ENCODE measurements at regions of chr1 and their contacts with region 1.

Region 1: GRCh38 chr1:41416552-41417334 is 55.5 kb downstream of the FOXO6 start:
- DNase-seq: peak; percentile 71
- H3K4me3 Mint-ChIP-seq: no peak overlapping the region
- H3K27ac Mint-ChIP-seq: no peak overlapping the region
- H3K4me1 Mint-ChIP-seq: no peaks in the 10 kb centered on the region
- H3K27me3 Mint-ChIP-seq: peaks cover 3% of the 10 kb centered on the region

Region 2: DNA sequence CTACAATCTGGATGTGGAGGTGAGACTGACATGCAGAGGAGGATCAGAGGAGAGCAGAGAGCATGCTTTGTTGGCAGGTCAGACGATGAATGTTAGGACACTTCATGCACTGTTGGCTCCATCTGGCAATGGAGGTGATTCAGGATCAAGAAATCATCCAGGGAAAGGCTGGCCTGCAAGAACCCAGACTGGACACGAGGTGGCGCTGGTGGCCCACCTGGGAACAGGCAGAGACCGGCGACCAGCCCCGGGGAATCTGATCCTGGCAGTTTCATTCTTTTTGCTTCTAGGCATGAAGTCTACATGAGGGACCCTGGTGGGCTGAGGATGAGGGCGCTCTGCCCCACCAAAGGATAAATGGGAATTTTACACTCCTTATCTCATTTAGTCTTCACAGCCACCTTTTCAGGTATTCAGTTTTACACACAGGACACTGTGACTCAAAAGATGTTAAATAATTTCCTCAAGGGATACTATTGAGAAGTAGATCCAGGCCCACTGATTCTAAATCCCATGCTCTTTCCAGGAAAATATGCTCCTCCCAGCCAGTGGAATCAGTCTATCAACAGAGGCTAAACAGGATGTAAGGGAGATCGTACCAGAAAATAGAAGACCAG is 148.5 kb before region 1 on chr1:
- CTCF ChIA-PET with region 1: interaction called, 7 read pairs
- intact Hi-C with region 1: loop called (anchors 1 kb)
- DNase-seq: peak; percentile 77
- H3K4me3 Mint-ChIP-seq: no peak overlapping the region
- H3K27ac Mint-ChIP-seq: no peak overlapping the region
- H3K4me1 Mint-ChIP-seq: no peaks in the 10 kb centered on the region
- H3K27me3 Mint-ChIP-seq: no peaks in the 10 kb centered on the region

Region 3: DNA sequence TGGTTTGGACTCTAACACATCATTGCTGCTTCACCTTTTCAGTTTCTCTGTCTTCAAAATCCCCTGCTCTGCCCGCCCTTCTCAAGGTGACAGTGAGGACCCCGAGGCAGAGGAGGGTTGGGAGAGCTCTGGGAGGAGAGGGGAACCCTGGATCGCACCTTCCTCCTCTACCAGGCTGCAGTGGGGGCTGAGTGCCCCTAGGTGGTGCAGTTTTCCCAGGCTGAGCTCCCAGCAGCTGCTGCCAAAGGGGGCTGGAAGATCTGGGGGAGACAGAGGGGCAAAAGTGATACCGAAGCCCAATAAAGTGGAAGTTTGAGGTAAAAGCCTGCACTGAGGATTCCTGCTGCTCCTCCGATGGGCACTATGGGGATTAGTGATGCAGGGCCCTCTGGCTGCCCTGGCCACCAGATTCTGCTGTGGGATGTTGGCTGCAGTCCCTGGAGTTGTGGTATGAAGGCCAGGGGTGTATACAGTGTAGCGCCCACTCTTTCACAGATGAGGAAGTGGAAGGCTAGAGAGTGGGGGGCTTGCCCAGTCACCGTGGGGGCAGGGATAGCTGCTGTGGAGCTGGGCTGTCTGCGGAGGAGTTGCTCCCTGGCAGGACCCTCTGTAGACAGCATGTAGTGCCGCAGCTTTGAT is 133.9 kb before region 1 on chr1:
- CTCF ChIA-PET with region 1: interaction called, 47 read pairs
- intact Hi-C with region 1: loop called (anchors 1 kb)
- DNase-seq: peak; percentile 43
- H3K4me3 Mint-ChIP-seq: no peak overlapping the region
- H3K27ac Mint-ChIP-seq: no peak overlapping the region
- H3K4me1 Mint-ChIP-seq: no peaks in the 10 kb centered on the region
- H3K27me3 Mint-ChIP-seq: peaks cover 28% of the 10 kb centered on the region

Region 4: GRCh38 chr1:41322835-41323627 is 93.7 kb before region 1 on chr1:
- CTCF ChIA-PET with region 1: interaction called, 17 read pairs
- intact Hi-C with region 1: loop called (anchors 1 kb)
- DNase-seq: peak; percentile 52
- H3K4me3 Mint-ChIP-seq: no peak overlapping the region
- H3K27ac Mint-ChIP-seq: no peak overlapping the region
- H3K4me1 Mint-ChIP-seq: no peaks in the 10 kb centered on the region
- H3K27me3 Mint-ChIP-seq: peaks cover 2% of the 10 kb centered on the region

Region 5: DNA sequence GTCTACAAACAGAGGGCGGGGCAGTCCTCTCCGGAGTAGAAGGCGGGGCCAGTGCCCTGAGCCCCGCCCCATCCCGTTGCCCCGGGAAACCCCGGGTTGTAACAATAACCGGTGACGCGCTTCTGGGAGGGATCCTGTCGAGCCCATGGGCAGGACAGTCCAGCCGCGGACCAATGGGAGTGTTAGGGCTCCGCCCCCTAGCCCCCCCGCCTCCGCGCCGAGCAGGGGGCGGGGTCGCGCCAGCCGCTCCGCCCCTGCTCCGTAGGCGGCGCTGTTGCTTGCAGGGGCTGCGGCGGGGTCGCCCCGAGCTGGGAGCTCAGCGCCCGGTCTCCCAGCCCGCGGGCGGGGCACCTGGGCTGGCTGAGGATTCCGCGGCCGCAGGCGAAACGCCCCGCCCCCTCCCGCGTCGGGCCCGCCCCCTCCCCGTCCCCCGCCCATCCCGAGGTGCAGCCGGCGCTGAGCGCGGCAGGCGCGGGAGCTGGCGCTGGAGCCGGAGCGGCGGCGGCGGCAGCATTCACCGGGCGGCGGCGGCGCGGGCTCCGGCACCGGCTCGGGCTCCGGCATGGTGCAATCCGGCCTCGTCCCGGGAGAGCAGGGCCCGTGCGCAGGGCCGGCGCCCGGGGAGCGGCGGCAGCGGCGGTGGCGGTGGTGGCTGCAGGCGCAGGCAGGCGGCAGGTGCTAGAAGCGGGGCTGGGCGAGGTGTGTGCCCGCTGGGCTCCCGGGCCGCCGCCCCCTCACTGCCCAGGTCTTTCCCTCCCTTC is 55.6 kb before region 1 on chr1 and contains the start of gene FOXO6:
- CTCF ChIA-PET with region 1: interaction called, 5 read pairs
- intact Hi-C with region 1: loop called (anchors 5 kb)
- DNase-seq: peak; percentile 95
- H3K4me3 Mint-ChIP-seq: peak within 1 kb of the TSS; percentile 64
- H3K27ac Mint-ChIP-seq: no peak within 1 kb of the TSS
- H3K4me1 Mint-ChIP-seq: peaks cover 13% of the 10 kb centered on the region
- H3K27me3 Mint-ChIP-seq: peaks cover 32% of the 10 kb centered on the region
- total RNA-seq, gene FOXO6: 0.15 TPM in 1 of 2 experiments, not detected in the other

Region 6: DNA sequence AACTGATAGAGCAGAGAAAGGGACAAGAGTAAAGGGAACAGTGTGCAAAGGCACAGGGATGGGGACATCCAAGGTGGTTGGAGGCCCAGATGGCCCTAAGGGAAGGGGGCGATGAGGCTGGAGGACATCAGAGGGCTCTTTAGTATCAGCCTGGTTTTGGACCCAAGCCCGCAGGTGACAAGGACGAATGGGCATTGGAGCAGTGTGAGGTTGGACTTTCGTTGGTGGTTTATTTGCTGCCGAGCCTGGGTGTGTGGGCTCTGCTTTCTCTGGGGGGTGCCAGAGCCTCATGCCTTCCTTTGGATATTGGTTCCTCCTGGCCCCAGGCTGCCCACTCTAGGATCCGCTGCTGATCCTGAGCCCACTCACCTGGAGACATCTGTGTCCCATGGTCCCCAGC is 43.4 kb before region 1 on chr1:
- CTCF ChIA-PET with region 1: no interaction called
- intact Hi-C with region 1: no loop called
- DNase-seq: no peak
- H3K4me3 Mint-ChIP-seq: no peak overlapping the region
- H3K27ac Mint-ChIP-seq: no peak overlapping the region
- H3K4me1 Mint-ChIP-seq: no peaks in the 10 kb centered on the region
- H3K27me3 Mint-ChIP-seq: peaks cover 20% of the 10 kb centered on the region

Region 7: DNA sequence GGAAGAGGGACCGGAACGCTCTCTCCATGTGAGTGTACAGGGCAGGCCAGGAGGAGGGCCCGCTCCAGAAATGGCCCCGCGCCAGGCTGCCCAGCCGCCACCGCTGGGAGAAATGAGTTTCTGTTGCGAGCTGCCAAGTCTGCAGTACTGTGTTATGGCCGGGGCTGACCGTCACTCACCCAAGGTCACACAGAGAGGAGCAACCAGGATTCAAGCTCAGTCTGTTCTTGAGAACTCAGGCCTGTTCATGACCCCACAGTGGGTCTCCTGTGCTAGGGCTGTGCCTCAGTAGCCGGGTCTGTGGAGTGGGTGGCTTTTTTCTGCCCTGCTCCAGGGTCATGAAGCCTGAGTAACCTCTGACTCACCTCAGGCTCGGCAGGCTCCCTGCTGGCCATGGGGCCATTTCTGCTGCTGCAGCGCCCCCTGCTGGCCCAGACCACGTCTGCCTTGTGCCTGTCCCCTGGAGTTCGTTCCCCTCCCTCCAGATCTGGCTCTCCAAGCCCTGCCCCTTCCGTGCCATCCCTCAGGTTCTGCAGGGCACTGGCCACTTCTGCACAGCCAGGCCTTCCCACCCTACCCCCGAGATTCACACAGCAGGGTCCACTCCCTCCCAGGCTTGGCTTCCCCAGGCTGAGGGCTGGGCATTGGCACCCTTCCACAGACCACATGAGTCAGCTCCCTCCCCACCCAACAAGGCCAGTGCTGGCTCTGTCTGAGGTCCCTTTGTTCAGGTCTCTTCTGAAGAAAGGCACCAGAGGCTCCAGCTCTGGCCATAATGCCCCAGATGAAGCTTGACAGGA is 15.9 kb after region 1 on chr1:
- CTCF ChIA-PET with region 1: interaction called, 10 read pairs
- intact Hi-C with region 1: no loop called
- DNase-seq: peak; percentile 86
- H3K4me3 Mint-ChIP-seq: no peak overlapping the region
- H3K27ac Mint-ChIP-seq: no peak overlapping the region
- H3K4me1 Mint-ChIP-seq: no peaks in the 10 kb centered on the region
- H3K27me3 Mint-ChIP-seq: peaks cover 19% of the 10 kb centered on the region

Region 8: DNA sequence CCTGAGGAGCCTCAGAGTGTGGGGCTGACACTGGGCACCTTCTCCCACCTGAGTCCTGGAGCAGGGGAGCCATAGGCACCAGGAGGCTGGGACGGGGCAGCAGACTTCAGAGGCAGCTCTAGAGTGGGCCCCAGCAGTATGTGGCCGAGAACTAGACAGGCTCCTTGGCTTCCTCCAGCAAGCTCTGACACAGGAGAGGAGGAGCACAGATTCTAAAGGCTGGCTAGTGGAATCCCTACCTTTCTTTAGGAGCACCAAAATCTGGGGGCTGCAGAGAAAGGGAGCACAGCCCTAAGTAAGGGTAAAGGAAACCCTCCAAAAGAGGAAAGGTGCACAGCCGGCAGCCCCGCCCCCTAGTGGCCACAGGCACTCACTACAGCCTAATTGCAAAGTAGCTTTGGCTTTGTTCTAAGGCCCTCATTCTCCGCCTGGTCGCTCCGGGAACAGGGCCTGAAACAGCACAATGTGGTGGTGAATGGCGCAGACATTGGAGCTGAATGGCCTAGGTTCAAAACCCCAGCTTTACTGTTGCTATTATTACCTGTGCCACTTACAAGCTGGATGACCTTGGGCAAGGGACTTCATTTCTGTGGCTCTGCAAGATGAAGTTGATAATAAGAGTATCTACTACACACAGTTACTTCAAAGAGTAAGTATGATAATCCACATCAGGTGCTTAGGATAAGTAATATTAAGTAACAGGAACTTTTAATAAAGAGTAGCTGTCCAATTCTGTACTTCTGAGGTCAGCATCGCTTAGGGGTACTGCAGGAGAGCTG is 756.6 kb after region 1 on chr1:
- CTCF ChIA-PET with region 1: no interaction called
- intact Hi-C with region 1: no loop called
- DNase-seq: peak; percentile 76
- H3K4me3 Mint-ChIP-seq: no peak overlapping the region
- H3K27ac Mint-ChIP-seq: no peak overlapping the region
- H3K4me1 Mint-ChIP-seq: no peaks in the 10 kb centered on the region
- H3K27me3 Mint-ChIP-seq: no peaks in the 10 kb centered on the region